ENCODE measurements at regions of chr2 and their contacts with region 1.

Region 1: GRCh38 chr2:162123806-162124758 is 28.0 kb downstream of the GCG start:
- DNase-seq: peak; percentile 74
- H3K4me3 ChIP-seq: no peak overlapping the region
- H3K27ac ChIP-seq: no peak overlapping the region
- H3K4me1 ChIP-seq: peaks cover 15% of the 10 kb centered on the region
- CTCF ChIP-seq: peak; percentile 96

Region 2: DNA sequence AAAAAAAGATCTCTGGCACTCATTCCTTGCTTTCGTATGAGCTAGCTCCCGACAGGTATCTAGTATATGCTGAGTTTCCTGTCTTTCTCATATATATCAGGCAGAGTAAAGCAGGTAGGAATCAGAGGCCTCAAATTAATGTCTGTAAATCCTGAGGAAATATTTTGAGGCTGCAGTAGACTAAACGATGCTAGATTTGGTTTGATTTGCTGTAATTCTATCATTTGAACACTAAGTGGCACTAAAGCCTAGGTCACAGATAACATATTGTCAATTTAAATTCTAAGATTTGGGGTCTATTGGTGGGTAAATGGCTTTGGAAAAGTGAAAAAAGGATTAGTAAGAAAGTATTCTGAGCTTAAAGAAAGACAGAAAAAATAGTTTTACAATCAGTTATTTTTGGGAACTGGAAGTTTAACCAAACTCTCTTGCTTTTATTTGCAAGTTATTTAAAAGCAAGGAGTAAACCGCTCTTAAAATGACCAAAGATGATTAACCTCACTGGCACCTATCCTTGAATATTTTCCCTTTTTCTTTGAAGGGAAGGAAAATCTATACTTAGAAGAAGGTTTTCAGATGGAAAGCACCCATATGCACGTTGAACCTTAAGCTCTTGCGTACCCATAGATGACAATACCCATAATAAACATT is 537.4 kb before region 1 on chr2:
- CTCF ChIA-PET with region 1: interaction called, 4 read pairs
- POLR2A ChIA-PET with region 1: no interaction called
- intact Hi-C with region 1: loop called (anchors 1 kb)
- DNase-seq: peak; percentile 26
- H3K4me3 ChIP-seq: no peak overlapping the region
- H3K27ac ChIP-seq: no peak overlapping the region
- H3K4me1 ChIP-seq: no peaks in the 10 kb centered on the region
- CTCF ChIP-seq: peak; percentile 93

Region 3: DNA sequence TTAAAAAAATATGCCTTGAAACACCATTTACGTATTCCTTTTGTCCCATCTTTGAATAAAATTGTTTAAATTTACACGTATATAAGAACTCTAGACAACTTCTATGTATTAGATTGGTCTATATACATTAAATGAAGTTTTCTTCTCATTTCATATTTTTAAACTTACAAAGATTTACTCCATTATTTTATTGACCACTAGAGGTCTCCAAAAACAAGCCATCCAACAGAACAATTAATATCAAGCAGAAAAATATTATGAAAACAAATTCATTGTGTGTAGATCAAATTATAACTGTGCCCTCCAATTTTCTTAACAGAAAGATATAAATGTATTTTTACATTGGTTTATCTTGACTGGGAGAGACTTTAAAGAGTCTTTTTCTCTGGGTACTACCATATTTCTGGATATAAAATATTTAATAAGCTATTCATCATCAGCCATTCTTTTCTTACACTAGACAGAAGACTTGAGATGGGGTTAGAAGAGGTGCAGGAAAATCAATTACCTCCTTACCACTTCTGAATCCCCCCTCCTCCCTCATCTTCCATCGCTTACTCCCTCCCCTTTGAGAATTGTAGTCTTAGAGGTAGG is 116.5 kb before region 1 on chr2:
- CTCF ChIA-PET with region 1: no interaction called
- POLR2A ChIA-PET with region 1: interaction called, 4 read pairs
- intact Hi-C with region 1: loop called (anchors 2 kb)
- DNase-seq: peak; percentile 11
- H3K4me3 ChIP-seq: no peak overlapping the region
- H3K27ac ChIP-seq: no peak overlapping the region
- H3K4me1 ChIP-seq: no peaks in the 10 kb centered on the region
- CTCF ChIP-seq: peak; percentile 93

Region 4: GRCh38 chr2:162153608-162154224 is 29.6 kb after region 1 on chr2:
- CTCF ChIA-PET with region 1: no interaction called
- POLR2A ChIA-PET with region 1: no interaction called
- intact Hi-C with region 1: no loop called
- DNase-seq: peak; percentile 51
- H3K4me3 ChIP-seq: no peak overlapping the region
- H3K27ac ChIP-seq: no peak overlapping the region
- H3K4me1 ChIP-seq: no peaks in the 10 kb centered on the region
- CTCF ChIP-seq: peak; percentile 84

Measured in OCI-LY7 (cell line).